T-cell (primary cell): ENCODE measurements at regions of chr3 and their contacts with region 1.

Region 1: GRCh38 chr3:16945330-16945729 is 60.6 kb downstream of the PLCL2 start:
- DNase-seq: no peak
- ATAC-seq: no peak
- H3K4me3 ChIP-seq: no peak overlapping the region
- H3K4me3 Mint-ChIP-seq: no peak overlapping the region
- H3K27ac ChIP-seq: no peak overlapping the region
- H3K27ac Mint-ChIP-seq: no peak overlapping the region
- H3K4me1 ChIP-seq: peaks cover 19 to 20% of the 10 kb centered on the region in 2 experiments
- H3K4me1 Mint-ChIP-seq: peaks cover 76 to 82% (median 80%) of the 10 kb centered on the region in 3 donors
- H3K27me3 ChIP-seq: no peaks in the 10 kb centered on the region
- H3K27me3 Mint-ChIP-seq: no peaks in the 10 kb centered on the region

Region 2: GRCh38 chr3:16961621-16962205 is 16.4 kb after region 1 on chr3:
- CTCF ChIA-PET with region 1: interaction called in 1 of 2 experiments, 12 read pairs
- POLR2A ChIA-PET with region 1: interaction called in 1 of 2 experiments, 3 read pairs
- DNase-seq: no peak
- ATAC-seq: no peak
- H3K4me3 ChIP-seq: no peak overlapping the region
- H3K4me3 Mint-ChIP-seq: no peak overlapping the region
- H3K27ac ChIP-seq: no peak overlapping the region
- H3K27ac Mint-ChIP-seq: peak overlapping the region; percentile 0 to 37
- H3K4me1 ChIP-seq: peaks cover 0 to 2% of the 10 kb centered on the region in 2 experiments
- H3K4me1 Mint-ChIP-seq: peaks cover 49 to 61% (median 61%) of the 10 kb centered on the region in 3 donors
- H3K27me3 ChIP-seq: no peaks in the 10 kb centered on the region
- H3K27me3 Mint-ChIP-seq: no peaks in the 10 kb centered on the region

Region 3: GRCh38 chr3:17355591-17355990 is 410.3 kb after region 1 on chr3:
- CTCF ChIA-PET with region 1: no interaction called
- POLR2A ChIA-PET with region 1: no interaction called
- DNase-seq: no peak
- ATAC-seq: no peak
- H3K4me3 ChIP-seq: no peak overlapping the region
- H3K4me3 Mint-ChIP-seq: no peak overlapping the region
- H3K27ac ChIP-seq: no peak overlapping the region
- H3K27ac Mint-ChIP-seq: no peak overlapping the region
- H3K4me1 ChIP-seq: no peaks in the 10 kb centered on the region
- H3K4me1 Mint-ChIP-seq: no peaks in the 10 kb centered on the region
- H3K27me3 ChIP-seq: no peaks in the 10 kb centered on the region
- H3K27me3 Mint-ChIP-seq: no peaks in the 10 kb centered on the region